Right ventricle myocardium inferior (tissue), 1 donor: ENCODE measurements at regions of chr6 and their contacts with region 1.

Region 1: GRCh38 chr6:34324738-34325444 is 67.6 kb downstream of the NUDT3 start:
- DNase-seq: no peak
- ATAC-seq: peak; percentile 89

Region 2: GRCh38 chr6:34207695-34208443 is 117.0 kb before region 1 on chr6:
- intact Hi-C with region 1: no loop called
- DNase-seq: no peak
- ATAC-seq: no peak

Region 3: DNA sequence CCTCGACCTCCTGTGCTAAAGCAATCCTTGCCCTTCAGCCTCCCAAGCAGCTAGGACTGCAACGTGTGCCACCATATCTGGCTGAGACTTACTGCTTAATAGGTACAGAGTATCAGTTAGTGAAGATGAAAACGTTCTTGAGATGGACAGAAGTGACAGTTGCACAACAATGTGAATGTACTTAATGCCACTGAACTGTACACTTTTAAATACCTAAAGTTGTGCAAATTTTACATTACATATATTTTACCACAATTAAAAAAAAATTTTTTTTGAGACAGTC is 41.7 kb after region 1 on chr6:
- intact Hi-C with region 1: loop called (anchors 5 kb)
- DNase-seq: no peak
- ATAC-seq: no peak